ENCODE measurements at regions of chr9 and their contacts with region 1.

Region 1: DNA sequence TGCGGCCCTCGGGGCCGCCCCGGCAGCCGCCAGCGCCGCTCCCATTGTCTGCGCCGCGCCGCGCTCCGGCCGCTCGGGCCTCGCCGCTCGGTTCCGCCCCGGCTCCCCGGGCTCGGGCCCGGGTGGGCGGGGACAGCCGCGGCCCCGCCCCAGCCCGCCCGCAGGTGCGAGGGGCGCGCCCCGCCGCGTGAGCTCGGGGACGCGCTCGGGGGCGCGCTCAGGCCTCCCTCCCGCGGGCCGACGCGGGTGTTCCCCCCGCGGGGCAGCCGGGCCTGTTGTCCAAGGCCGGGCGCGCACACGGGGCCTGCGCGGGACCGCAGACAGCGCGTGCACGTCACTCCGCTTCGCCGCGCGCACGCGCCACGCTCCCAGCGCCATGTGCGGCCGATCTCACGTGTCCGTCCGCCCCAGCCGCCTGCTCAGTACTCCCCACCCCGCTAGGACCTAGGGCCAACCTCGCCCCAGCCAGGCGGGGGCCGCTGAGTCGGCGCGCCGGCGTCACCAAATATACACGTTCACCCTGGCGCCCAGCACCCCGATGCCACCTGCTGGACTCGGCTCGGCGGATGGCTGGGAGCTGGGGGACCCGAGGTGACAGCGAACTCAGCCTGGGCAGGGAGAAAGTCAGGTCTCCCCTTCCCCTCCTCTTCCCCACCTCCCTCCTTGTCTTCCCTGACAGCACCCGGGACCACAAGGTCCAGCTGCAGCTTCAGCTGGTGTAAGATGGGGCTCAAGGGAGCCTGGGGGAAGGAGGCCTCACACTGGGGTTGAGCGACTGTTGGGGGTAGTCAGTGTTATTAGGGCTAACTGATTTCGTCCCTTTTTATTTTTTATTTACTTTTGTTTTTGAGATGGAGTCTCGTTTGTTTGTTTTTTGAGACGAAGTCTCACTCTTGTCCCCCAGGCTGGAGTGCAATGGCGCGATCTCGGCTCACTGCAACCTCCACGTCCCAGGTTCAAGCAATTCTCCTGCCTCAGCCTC is 14.3 kb downstream of the GBGT1 start:
- DNase-seq: peak; percentile 63 to 88 (median 68)
- ATAC-seq: peak; percentile 67
- H3K4me3 ChIP-seq: peak overlapping the region; percentile 71
- H3K4me3 Mint-ChIP-seq: peak overlapping the region; percentile 55 to 83 (median 76)
- H3K27ac ChIP-seq: peak overlapping the region; percentile 80
- H3K27ac Mint-ChIP-seq: peak overlapping the region; percentile 71 to 88 (median 84)
- H3K4me1 ChIP-seq: peaks cover 27 to 34% of the 10 kb centered on the region in 2 donors
- H3K4me1 Mint-ChIP-seq: peaks cover 10 to 46% (median 35%) of the 10 kb centered on the region in 7 donors
- H3K27me3 ChIP-seq: no peaks in the 10 kb centered on the region
- H3K27me3 Mint-ChIP-seq: no peaks in the 10 kb centered on the region

Region 2: DNA sequence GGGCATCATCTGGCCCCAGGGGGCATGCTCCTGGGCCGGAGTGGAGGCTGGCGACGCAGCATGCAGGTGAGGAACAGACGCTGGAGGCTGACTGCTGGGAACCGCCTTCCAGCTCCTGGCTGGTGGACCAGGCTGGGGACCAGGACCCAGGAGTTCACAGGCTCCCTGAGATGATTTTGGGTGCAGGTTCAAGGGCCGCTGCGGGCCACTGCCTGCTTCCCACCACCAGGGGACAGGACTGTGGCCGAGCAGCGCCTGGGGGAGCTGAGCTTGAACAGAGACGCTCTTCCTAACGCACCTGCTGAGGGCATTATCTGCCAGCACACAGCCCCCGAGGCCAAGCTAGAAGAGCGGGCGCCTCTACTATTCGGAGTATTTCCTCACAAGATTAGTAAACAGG is 1277.4 kb before region 1 on chr9:
- CTCF ChIA-PET with region 1: no interaction called
- POLR2A ChIA-PET with region 1: no interaction called
- intact Hi-C with region 1: no loop called
- DNase-seq: no peak
- ATAC-seq: no peak
- H3K4me3 ChIP-seq: no peak overlapping the region
- H3K4me3 Mint-ChIP-seq: no peak overlapping the region
- H3K27ac ChIP-seq: no peak overlapping the region
- H3K27ac Mint-ChIP-seq: peak overlapping the region in 1 of 9 donors; percentile 87
- H3K4me1 ChIP-seq: no peaks in the 10 kb centered on the region
- H3K4me1 Mint-ChIP-seq: peaks cover 0 to 20% (median 0%) of the 10 kb centered on the region in 7 donors
- H3K27me3 ChIP-seq: no peaks in the 10 kb centered on the region
- H3K27me3 Mint-ChIP-seq: no peaks in the 10 kb centered on the region

Region 3: DNA sequence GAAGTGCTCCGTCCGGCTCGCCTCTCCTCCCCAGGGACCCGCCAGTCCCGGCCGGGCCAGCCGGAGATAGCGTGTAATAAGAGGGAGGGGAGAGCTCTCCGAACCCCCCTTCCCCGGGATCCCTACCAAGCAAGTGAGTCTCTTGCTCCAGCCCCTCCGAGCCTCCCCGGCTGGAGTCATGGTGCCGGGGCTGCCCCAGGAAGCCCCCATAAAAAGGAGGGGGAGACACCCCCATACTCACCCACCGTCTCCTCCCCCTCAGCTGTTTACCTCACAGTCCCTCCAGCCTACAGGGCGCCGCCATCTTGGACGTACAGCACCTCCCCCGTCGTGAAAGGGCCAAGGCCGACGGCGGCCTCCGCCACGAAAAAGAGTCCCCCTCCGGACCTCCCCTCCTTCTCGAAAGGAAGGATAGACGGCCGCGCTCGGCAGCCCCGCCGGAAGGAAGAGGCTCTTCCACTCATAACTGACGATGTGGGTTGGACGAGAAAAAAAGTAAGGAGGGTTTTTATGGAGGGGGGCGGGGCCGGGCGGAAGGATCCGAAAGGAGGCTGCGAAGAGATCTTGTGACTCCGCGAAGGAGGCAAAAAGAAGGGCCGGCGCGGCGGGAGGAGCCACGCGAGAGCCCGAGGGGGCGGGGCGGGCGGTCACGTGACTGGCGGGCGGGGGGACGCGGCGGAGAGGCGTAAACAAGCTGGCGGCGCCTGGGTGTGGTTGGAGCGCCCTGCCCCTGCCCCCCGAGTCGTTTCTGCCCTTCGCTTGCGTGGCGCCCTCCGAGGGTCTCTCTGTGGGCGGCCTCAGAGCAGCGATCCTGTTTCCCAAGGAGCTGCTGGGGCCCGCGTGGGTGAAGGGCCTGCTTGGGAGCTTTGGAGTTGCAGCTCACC is 204.9 kb before region 1 on chr9 and contains the start of gene TSC1:
- CTCF ChIA-PET with region 1: no interaction called
- POLR2A ChIA-PET with region 1: interaction called, 3 read pairs
- intact Hi-C with region 1: loop called in 1 of 2 experiments (anchors 10 kb)
- DNase-seq: peak; percentile 96 to 99 (median 98)
- ATAC-seq: peak; percentile 94
- H3K4me3 ChIP-seq: peak within 1 kb of the TSS; percentile 93
- H3K4me3 Mint-ChIP-seq: peak within 1 kb of the TSS; percentile 90 to 99 (median 98)
- H3K27ac ChIP-seq: peak within 1 kb of the TSS; percentile 94
- H3K27ac Mint-ChIP-seq: peak within 1 kb of the TSS; percentile 99 to 100 (median 100)
- H3K4me1 ChIP-seq: peaks cover 8 to 14% of the 10 kb centered on the region in 2 donors
- H3K4me1 Mint-ChIP-seq: peaks cover 15 to 45% (median 27%) of the 10 kb centered on the region in 7 donors
- H3K27me3 ChIP-seq: no peaks in the 10 kb centered on the region
- H3K27me3 Mint-ChIP-seq: peaks cover 0 to 3% (median 0%) of the 10 kb centered on the region in 5 donors
- total RNA-seq, gene TSC1: 38.1 to 98.3 (median 59.6) TPM

Region 4: GRCh38 chr9:133030317-133031129 is 118.9 kb before region 1 on chr9 and contains the start of gene GTF3C5:
- CTCF ChIA-PET with region 1: interaction called, 6 read pairs
- POLR2A ChIA-PET with region 1: interaction called, 14 read pairs
- intact Hi-C with region 1: loop called (anchors 1 kb)
- DNase-seq: peak; percentile 77 to 97 (median 94)
- ATAC-seq: peak; percentile 98
- H3K4me3 ChIP-seq: peak within 1 kb of the TSS; percentile 83
- H3K4me3 Mint-ChIP-seq: peak within 1 kb of the TSS; percentile 87 to 100 (median 98)
- H3K27ac ChIP-seq: peak within 1 kb of the TSS; percentile 90
- H3K27ac Mint-ChIP-seq: peak within 1 kb of the TSS; percentile 94 to 99 (median 98)
- H3K4me1 ChIP-seq: peaks cover 13 to 25% of the 10 kb centered on the region in 2 donors
- H3K4me1 Mint-ChIP-seq: peaks cover 34 to 81% (median 59%) of the 10 kb centered on the region in 7 donors
- H3K27me3 ChIP-seq: no peaks in the 10 kb centered on the region
- H3K27me3 Mint-ChIP-seq: no peaks in the 10 kb centered on the region
- total RNA-seq, gene GTF3C5: 43.9 to 77.9 (median 73.9) TPM

Region 5: DNA sequence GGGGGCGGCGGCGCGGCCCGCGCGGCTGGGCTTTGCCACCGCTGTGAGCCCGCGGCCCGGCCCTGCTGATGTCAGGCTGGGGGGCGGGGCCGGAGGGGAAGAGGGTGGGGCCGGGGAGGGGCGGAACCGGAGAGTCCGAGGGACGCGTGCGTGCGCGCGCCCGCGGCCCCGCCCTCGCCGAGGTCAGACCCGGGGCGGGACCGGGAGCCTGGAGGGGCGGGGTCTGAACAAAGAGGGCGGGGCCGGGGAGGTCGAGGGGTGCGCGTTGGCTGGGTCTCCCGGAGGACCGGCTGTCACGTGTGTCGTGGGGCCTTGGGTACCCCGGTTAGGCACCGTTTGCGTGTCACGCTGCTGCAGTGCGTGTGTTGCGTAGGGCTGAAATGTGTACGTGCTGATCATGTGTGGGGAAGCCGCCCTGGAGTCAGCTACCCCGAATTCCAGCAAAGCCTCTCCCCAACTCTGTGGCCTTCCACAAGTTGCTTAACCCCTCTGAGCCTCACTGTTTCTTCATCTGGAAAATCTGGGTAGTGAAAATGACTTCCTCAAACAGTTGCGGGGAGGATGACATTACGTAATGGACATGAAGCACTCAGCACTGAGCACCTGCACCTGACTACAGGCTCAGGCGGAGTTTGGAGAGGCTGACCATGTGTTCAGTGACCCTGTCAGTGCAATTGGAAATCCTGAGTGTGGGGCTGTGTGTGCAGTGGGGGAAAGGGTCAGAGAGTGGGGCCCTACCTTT is 28.0 kb before region 1 on chr9 and contains the start of gene RALGDS:
- CTCF ChIA-PET with region 1: interaction called, 22 read pairs
- POLR2A ChIA-PET with region 1: interaction called, 15 read pairs
- intact Hi-C with region 1: loop called (anchors 1 kb)
- DNase-seq: peak; percentile 79 to 93 (median 88)
- ATAC-seq: peak; percentile 91
- H3K4me3 ChIP-seq: peak within 1 kb of the TSS; percentile 58
- H3K4me3 Mint-ChIP-seq: peak within 1 kb of the TSS; percentile 78 to 88 (median 82)
- H3K27ac ChIP-seq: peak within 1 kb of the TSS; percentile 93
- H3K27ac Mint-ChIP-seq: peak within 1 kb of the TSS; percentile 58 to 99 (median 98)
- H3K4me1 ChIP-seq: peaks cover 22 to 52% of the 10 kb centered on the region in 2 donors
- H3K4me1 Mint-ChIP-seq: peaks cover 27 to 74% (median 47%) of the 10 kb centered on the region in 7 donors
- H3K27me3 ChIP-seq: no peaks in the 10 kb centered on the region
- H3K27me3 Mint-ChIP-seq: no peaks in the 10 kb centered on the region
- total RNA-seq, gene RALGDS: 73.9 to 123 (median 79.7) TPM

Region 6: GRCh38 chr9:133356391-133357091 is 207.1 kb after region 1 on chr9 and contains the starts of genes SURF1 and SURF2:
- CTCF ChIA-PET with region 1: no interaction called
- POLR2A ChIA-PET with region 1: no interaction called
- intact Hi-C with region 1: loop called in 1 of 2 experiments (anchors 5 kb)
- DNase-seq: peak; percentile 77 to 92 (median 87)
- ATAC-seq: peak; percentile 96
- H3K4me3 ChIP-seq: peak within 1 kb of the TSS; percentile 64
- H3K4me3 Mint-ChIP-seq: peak within 1 kb of the TSS; percentile 80 to 94 (median 89)
- H3K27ac ChIP-seq: peak within 1 kb of the TSS; percentile 91
- H3K27ac Mint-ChIP-seq: peak within 1 kb of the TSS; percentile 72 to 91 (median 84)
- H3K4me1 ChIP-seq: peaks cover 12 to 28% of the 10 kb centered on the region in 2 donors
- H3K4me1 Mint-ChIP-seq: peaks cover 20 to 42% (median 28%) of the 10 kb centered on the region in 7 donors
- H3K27me3 ChIP-seq: no peaks in the 10 kb centered on the region
- H3K27me3 Mint-ChIP-seq: no peaks in the 10 kb centered on the region
- total RNA-seq, gene SURF1: 40.5 to 53.5 (median 47.9) TPM
- total RNA-seq, gene SURF2: 15.0 to 23.5 (median 15.6) TPM

Region 7: DNA sequence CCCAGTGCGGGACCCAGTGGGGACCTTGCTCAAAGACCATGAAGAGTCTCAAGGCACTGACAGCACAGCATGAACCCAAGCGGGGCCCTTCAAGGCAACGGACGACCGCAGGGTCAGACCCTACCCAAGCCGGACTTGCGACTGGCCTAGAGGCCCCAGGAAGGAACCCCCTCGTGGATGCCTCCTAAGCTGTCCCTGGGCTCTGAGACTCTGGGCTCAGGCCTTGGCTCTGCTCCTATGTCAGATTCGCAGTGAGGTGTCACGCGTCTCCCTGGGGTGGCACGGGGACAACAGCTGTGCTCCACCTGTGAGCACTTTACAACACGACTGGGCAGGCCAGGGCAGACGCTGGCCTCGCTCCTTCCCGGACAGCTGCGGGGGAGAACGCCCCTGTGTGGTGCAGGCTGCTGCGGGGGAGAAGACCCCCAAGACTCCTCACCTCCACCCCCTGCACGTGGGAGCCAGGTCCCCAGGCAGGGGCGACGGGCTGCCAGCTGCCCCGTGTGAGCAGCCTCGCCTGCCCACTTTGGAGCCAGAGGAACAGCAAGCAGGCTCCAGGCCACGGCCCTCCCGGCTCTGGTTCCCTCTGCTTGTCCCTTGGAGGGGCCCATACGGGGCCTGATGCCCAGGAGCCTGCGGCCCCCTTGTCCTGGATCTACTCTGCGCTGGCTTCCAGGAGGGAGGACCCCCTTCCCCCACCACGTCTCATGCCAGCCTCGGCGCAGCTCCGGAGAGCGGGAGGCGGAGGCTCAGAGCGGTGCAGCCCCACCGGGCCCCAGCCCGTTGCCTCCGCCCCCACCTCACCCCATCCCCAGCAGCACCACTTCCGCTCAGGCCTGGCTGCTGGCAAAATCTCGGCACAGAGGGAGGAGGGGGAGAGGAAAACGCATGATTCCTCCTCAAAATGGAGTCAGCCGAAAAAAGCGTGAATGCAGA is 552.7 kb after region 1 on chr9:
- CTCF ChIA-PET with region 1: no interaction called
- POLR2A ChIA-PET with region 1: no interaction called
- intact Hi-C with region 1: loop called in 1 of 2 experiments (anchors 10 kb)
- DNase-seq: peak; percentile 46 to 85 (median 80)
- ATAC-seq: peak; percentile 85
- H3K4me3 ChIP-seq: peak overlapping the region; percentile 70
- H3K4me3 Mint-ChIP-seq: peak overlapping the region; percentile 79 to 93 (median 91)
- H3K27ac ChIP-seq: peak overlapping the region; percentile 91
- H3K27ac Mint-ChIP-seq: peak overlapping the region; percentile 83 to 100 (median 99)
- H3K4me1 ChIP-seq: peaks cover 31 to 62% of the 10 kb centered on the region in 2 donors
- H3K4me1 Mint-ChIP-seq: peaks cover 29 to 85% (median 66%) of the 10 kb centered on the region in 7 donors
- H3K27me3 ChIP-seq: no peaks in the 10 kb centered on the region
- H3K27me3 Mint-ChIP-seq: peaks cover 0 to 19% (median 0%) of the 10 kb centered on the region in 5 donors

Region 8: DNA sequence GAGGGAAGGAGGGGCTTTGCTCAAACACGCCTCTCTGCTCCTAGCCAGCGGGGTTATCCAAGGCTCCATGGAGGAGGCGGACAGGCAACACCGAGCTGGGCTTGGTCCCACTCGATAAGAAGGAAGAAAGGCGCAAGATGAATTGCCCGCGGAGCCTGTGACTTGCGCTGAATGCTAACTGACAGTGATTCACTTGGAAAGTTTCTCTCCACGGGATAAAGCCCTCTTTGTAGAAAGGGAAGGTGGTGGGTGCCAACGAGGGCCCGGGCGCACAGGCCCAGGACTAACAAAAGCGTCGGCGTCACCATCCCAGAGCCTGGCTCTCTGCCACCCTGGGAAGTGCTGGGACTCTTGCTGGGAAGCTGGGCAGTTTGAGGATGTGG is 766.7 kb after region 1 on chr9:
- CTCF ChIA-PET with region 1: no interaction called
- POLR2A ChIA-PET with region 1: no interaction called
- intact Hi-C with region 1: no loop called
- DNase-seq: no peak
- ATAC-seq: no peak
- H3K4me3 ChIP-seq: no peak overlapping the region
- H3K4me3 Mint-ChIP-seq: no peak overlapping the region
- H3K27ac ChIP-seq: no peak overlapping the region
- H3K27ac Mint-ChIP-seq: no peak overlapping the region
- H3K4me1 ChIP-seq: no peaks in the 10 kb centered on the region
- H3K4me1 Mint-ChIP-seq: peaks cover 0 to 12% (median 8%) of the 10 kb centered on the region in 7 donors
- H3K27me3 ChIP-seq: no peaks in the 10 kb centered on the region
- H3K27me3 Mint-ChIP-seq: peaks cover 0 to 6% (median 0%) of the 10 kb centered on the region in 5 donors

Region 9: GRCh38 chr9:134099123-134099787 is 949.8 kb after region 1 on chr9:
- CTCF ChIA-PET with region 1: no interaction called
- POLR2A ChIA-PET with region 1: no interaction called
- intact Hi-C with region 1: no loop called
- DNase-seq: peak; percentile 13 to 60 (median 55)
- ATAC-seq: peak; percentile 90
- H3K4me3 ChIP-seq: no peak overlapping the region
- H3K4me3 Mint-ChIP-seq: no peak overlapping the region
- H3K27ac ChIP-seq: no peak overlapping the region
- H3K27ac Mint-ChIP-seq: no peak overlapping the region
- H3K4me1 ChIP-seq: no peaks in the 10 kb centered on the region
- H3K4me1 Mint-ChIP-seq: peaks cover 0 to 5% (median 3%) of the 10 kb centered on the region in 7 donors
- H3K27me3 ChIP-seq: no peaks in the 10 kb centered on the region
- H3K27me3 Mint-ChIP-seq: peaks cover 2 to 23% (median 15%) of the 10 kb centered on the region in 5 donors